ENCODE measurements at regions of chr14 and their contacts with region 1.

Region 1: GRCh38 chr14:35046048-35046741 is at the start of gene FAM177A1:
- DNase-seq: peak; percentile 89 to 100 (median 98)
- ATAC-seq: peak; percentile 94
- H3K4me3 ChIP-seq: peak within 1 kb of the TSS; percentile 80
- H3K4me3 Mint-ChIP-seq: peak within 1 kb of the TSS; percentile 88 to 99 (median 93)
- H3K27ac ChIP-seq: peak within 1 kb of the TSS; percentile 99
- H3K27ac Mint-ChIP-seq: peak within 1 kb of the TSS; percentile 96 to 100 (median 99)
- H3K4me1 ChIP-seq: peaks cover 11 to 19% of the 10 kb centered on the region in 2 donors
- H3K4me1 Mint-ChIP-seq: peaks cover 13 to 39% (median 34%) of the 10 kb centered on the region in 7 donors
- H3K27me3 ChIP-seq: no peaks in the 10 kb centered on the region
- H3K27me3 Mint-ChIP-seq: no peaks in the 10 kb centered on the region
- total RNA-seq, gene FAM177A1: 34.3 to 135 (median 41.7) TPM

Region 2: DNA sequence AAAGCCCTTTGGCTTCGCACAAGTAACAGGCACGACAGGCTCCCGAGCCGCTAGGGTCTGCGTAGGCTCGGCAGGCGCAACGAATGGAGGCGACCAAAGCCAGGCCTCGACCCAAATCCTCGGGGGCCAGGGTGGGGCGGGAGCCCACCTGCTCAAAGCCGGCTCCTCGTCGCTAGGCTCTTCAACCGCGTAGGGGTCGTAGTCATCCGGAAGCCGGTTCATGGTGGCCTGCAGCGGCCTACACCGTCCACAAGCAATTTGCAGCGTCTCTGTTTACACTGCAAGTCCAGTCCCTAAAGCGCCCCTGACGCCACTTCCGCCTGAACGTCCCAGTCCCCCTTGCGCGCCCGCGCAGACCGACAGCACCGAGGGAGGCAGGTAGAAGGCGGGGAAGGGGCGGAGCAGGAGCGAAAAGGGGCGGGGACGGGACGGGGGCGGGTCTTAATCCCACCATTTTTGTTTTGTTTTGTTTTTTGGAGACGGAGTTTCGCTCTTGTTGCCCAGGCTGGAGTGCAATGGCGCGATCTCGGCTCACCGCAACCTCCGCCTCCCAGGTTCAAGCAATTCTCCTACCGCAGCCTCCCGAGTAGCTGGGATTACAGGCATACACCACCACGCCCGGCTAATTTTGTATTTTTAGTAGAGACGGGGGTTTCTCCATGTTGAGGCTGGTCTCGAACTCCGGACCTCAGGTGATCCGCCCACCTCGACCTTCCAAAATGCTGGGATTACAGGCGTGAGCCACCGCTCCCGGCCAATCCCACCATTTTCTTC is 506.6 kb before region 1 on chr14 and contains the start of gene EAPP:
- CTCF ChIA-PET with region 1: no interaction called
- POLR2A ChIA-PET with region 1: interaction called, 3 read pairs
- intact Hi-C with region 1: loop called in 1 of 2 experiments (anchors 5 kb)
- DNase-seq: peak; percentile 84 to 95 (median 91)
- ATAC-seq: peak; percentile 100
- H3K4me3 ChIP-seq: peak within 1 kb of the TSS; percentile 100
- H3K4me3 Mint-ChIP-seq: peak within 1 kb of the TSS; percentile 95 to 99 (median 99)
- H3K27ac ChIP-seq: peak within 1 kb of the TSS; percentile 97
- H3K27ac Mint-ChIP-seq: peak within 1 kb of the TSS; percentile 95 to 100 (median 99)
- H3K4me1 ChIP-seq: peaks cover 18 to 24% of the 10 kb centered on the region in 2 donors
- H3K4me1 Mint-ChIP-seq: peaks cover 5 to 45% (median 31%) of the 10 kb centered on the region in 7 donors
- H3K27me3 ChIP-seq: no peaks in the 10 kb centered on the region
- H3K27me3 Mint-ChIP-seq: no peaks in the 10 kb centered on the region
- total RNA-seq, gene EAPP: 34.8 to 84.3 (median 60.9) TPM

Region 3: GRCh38 chr14:34671716-34672115 is 374.5 kb before region 1 on chr14:
- CTCF ChIA-PET with region 1: no interaction called
- POLR2A ChIA-PET with region 1: no interaction called
- intact Hi-C with region 1: loop called in 1 of 2 experiments (anchors 2 kb)
- DNase-seq: no peak
- ATAC-seq: no peak
- H3K4me3 ChIP-seq: no peak overlapping the region
- H3K4me3 Mint-ChIP-seq: no peak overlapping the region
- H3K27ac ChIP-seq: no peak overlapping the region
- H3K27ac Mint-ChIP-seq: no peak overlapping the region
- H3K4me1 ChIP-seq: no peaks in the 10 kb centered on the region
- H3K4me1 Mint-ChIP-seq: peaks cover 0 to 1% (median 0%) of the 10 kb centered on the region in 7 donors
- H3K27me3 ChIP-seq: no peaks in the 10 kb centered on the region
- H3K27me3 Mint-ChIP-seq: peaks cover 0 to 2% (median 0%) of the 10 kb centered on the region in 5 donors

Region 4: GRCh38 chr14:34875031-34875922 is 170.9 kb before region 1 on chr14 and contains the start of gene BAZ1A:
- CTCF ChIA-PET with region 1: no interaction called
- POLR2A ChIA-PET with region 1: interaction called, 4 read pairs
- intact Hi-C with region 1: loop called (anchors 1 kb)
- DNase-seq: peak; percentile 26 to 61 (median 55)
- ATAC-seq: peak; percentile 14
- H3K4me3 ChIP-seq: peak within 1 kb of the TSS; percentile 85
- H3K4me3 Mint-ChIP-seq: peak within 1 kb of the TSS; percentile 91 to 100 (median 99)
- H3K27ac ChIP-seq: peak within 1 kb of the TSS; percentile 96
- H3K27ac Mint-ChIP-seq: peak within 1 kb of the TSS; percentile 94 to 100 (median 99)
- H3K4me1 ChIP-seq: peaks cover 10 to 19% of the 10 kb centered on the region in 2 donors
- H3K4me1 Mint-ChIP-seq: peaks cover 18 to 40% (median 34%) of the 10 kb centered on the region in 7 donors
- H3K27me3 ChIP-seq: no peaks in the 10 kb centered on the region
- H3K27me3 Mint-ChIP-seq: no peaks in the 10 kb centered on the region
- total RNA-seq, gene BAZ1A: 47.4 to 62.5 (median 53.3) TPM

Region 5: GRCh38 chr14:35034440-35034833 is 11.8 kb before region 1 on chr14:
- CTCF ChIA-PET with region 1: no interaction called
- POLR2A ChIA-PET with region 1: interaction called, 5 read pairs
- intact Hi-C with region 1: loop called in 1 of 2 experiments (anchors 1 kb)
- DNase-seq: no peak
- ATAC-seq: no peak
- H3K4me3 ChIP-seq: no peak overlapping the region
- H3K4me3 Mint-ChIP-seq: no peak overlapping the region
- H3K27ac ChIP-seq: no peak overlapping the region
- H3K27ac Mint-ChIP-seq: no peak overlapping the region
- H3K4me1 ChIP-seq: no peaks in the 10 kb centered on the region
- H3K4me1 Mint-ChIP-seq: no peaks in the 10 kb centered on the region
- H3K27me3 ChIP-seq: no peaks in the 10 kb centered on the region
- H3K27me3 Mint-ChIP-seq: no peaks in the 10 kb centered on the region

Region 6: DNA sequence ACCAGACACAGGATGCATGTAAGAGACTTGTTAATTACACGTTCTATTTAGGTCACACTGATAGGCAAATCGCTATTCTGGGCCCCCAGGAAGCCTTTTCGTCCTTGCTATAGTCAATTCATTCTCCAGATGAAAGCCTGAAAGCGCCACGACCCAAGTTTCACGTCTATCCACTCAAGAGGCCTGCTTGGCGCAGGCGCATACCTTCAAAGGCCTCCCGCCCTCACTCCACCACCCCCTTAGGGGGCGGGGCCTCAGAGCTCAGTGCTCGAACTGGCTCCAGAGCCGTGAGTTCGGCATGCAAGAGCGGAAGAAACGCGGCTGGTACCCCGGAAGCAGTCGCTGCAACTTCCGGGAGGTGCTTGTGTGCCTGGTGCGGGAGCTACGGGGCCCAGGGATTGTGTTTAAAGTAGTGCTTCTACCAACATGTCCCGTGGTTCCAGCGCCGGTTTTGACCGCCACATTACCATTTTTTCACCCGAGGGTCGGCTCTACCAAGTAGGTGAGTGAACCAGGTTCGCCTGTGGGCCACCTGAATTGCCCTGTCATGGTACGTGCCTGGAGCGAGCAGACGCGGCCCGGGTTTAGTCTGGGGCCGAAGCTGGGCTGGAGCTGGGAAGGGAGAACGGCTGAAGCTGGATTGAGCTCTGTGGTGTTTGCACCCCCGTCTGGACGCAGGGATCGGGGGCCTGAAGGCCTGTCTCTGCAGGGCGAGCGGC is 246.0 kb after region 1 on chr14 and contains the start of gene PSMA6:
- CTCF ChIA-PET with region 1: no interaction called
- POLR2A ChIA-PET with region 1: interaction called, 12 read pairs
- intact Hi-C with region 1: loop called (anchors 1 kb)
- DNase-seq: peak; percentile 96 to 99 (median 99)
- ATAC-seq: peak; percentile 99
- H3K4me3 ChIP-seq: peak within 1 kb of the TSS; percentile 89
- H3K4me3 Mint-ChIP-seq: peak within 1 kb of the TSS; percentile 92 to 99 (median 97)
- H3K27ac ChIP-seq: peak within 1 kb of the TSS; percentile 90
- H3K27ac Mint-ChIP-seq: peak within 1 kb of the TSS; percentile 94 to 99 (median 96)
- H3K4me1 ChIP-seq: peaks cover 16 to 22% of the 10 kb centered on the region in 2 donors
- H3K4me1 Mint-ChIP-seq: peaks cover 17 to 54% (median 51%) of the 10 kb centered on the region in 7 donors
- H3K27me3 ChIP-seq: no peaks in the 10 kb centered on the region
- H3K27me3 Mint-ChIP-seq: no peaks in the 10 kb centered on the region
- total RNA-seq, gene PSMA6: 76.6 to 274 (median 90.0) TPM

Region 7: GRCh38 chr14:35808076-35808652 is 762.0 kb after region 1 on chr14:
- CTCF ChIA-PET with region 1: no interaction called
- POLR2A ChIA-PET with region 1: interaction called, 3 read pairs
- intact Hi-C with region 1: loop called in 1 of 2 experiments (anchors 5 kb)
- DNase-seq: peak in 1 of 9 donors; percentile 28
- ATAC-seq: no peak
- H3K4me3 ChIP-seq: peak overlapping the region; percentile 80
- H3K4me3 Mint-ChIP-seq: peak overlapping the region; percentile 85 to 99 (median 98)
- H3K27ac ChIP-seq: peak overlapping the region; percentile 77
- H3K27ac Mint-ChIP-seq: peak overlapping the region; percentile 80 to 97 (median 96)
- H3K4me1 ChIP-seq: peaks cover 14 to 16% of the 10 kb centered on the region in 2 donors
- H3K4me1 Mint-ChIP-seq: peaks cover 18 to 55% (median 34%) of the 10 kb centered on the region in 7 donors
- H3K27me3 ChIP-seq: no peaks in the 10 kb centered on the region
- H3K27me3 Mint-ChIP-seq: peaks cover 0 to 6% (median 0%) of the 10 kb centered on the region in 5 donors

Region 8: DNA sequence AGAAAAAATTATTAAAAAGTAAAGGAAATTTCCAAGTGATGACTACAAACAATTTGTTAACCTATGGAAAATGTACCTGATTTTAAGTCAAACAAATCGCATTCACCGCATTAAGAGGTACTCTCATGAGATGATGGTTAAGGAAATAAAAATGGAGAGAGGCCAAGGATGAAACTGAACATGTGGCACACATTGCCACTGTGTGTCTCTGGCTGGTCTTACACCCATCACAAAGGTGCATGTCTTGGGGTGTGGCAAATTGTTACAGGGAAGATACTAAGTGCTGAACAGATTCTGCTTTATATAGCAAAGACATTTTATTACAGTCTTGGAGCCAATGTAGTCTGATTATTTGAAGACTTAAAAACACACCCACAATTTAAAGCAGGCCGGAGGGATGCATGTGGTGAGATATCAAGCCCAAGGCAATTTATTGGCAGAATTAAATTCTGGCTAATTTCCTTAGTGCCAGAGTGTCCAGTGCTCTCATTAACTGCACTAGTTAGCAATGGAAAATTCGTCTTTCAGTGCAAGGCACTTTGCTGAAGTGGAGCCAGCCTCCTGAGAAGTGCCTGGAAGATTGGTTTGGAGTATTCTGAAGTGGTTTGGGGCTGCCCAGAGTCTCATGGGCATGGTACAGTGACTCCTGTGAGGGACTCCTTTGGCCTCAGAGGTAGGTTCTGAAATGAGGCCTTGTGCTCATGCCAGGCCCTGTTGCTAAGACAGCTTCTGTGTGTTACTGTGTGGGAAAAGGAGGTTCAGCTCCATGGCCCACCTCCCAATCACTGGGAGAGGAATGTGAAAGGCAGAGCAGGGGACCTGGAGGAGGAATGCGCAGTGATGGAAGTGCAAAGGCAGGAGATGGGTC is 946.9 kb after region 1 on chr14:
- CTCF ChIA-PET with region 1: no interaction called
- POLR2A ChIA-PET with region 1: no interaction called
- intact Hi-C with region 1: no loop called
- DNase-seq: no peak
- ATAC-seq: no peak
- H3K4me3 ChIP-seq: no peak overlapping the region
- H3K4me3 Mint-ChIP-seq: no peak overlapping the region
- H3K27ac ChIP-seq: no peak overlapping the region
- H3K27ac Mint-ChIP-seq: no peak overlapping the region
- H3K4me1 ChIP-seq: no peaks in the 10 kb centered on the region
- H3K4me1 Mint-ChIP-seq: no peaks in the 10 kb centered on the region
- H3K27me3 ChIP-seq: no peaks in the 10 kb centered on the region
- H3K27me3 Mint-ChIP-seq: peaks cover 0 to 8% (median 4%) of the 10 kb centered on the region in 5 donors